Activated B cell treated with CpG ODN at 0.5 μM for 24 hours (primary cell): ENCODE measurements at regions of chr2 and their contacts with region 1.

Region 1: DNA sequence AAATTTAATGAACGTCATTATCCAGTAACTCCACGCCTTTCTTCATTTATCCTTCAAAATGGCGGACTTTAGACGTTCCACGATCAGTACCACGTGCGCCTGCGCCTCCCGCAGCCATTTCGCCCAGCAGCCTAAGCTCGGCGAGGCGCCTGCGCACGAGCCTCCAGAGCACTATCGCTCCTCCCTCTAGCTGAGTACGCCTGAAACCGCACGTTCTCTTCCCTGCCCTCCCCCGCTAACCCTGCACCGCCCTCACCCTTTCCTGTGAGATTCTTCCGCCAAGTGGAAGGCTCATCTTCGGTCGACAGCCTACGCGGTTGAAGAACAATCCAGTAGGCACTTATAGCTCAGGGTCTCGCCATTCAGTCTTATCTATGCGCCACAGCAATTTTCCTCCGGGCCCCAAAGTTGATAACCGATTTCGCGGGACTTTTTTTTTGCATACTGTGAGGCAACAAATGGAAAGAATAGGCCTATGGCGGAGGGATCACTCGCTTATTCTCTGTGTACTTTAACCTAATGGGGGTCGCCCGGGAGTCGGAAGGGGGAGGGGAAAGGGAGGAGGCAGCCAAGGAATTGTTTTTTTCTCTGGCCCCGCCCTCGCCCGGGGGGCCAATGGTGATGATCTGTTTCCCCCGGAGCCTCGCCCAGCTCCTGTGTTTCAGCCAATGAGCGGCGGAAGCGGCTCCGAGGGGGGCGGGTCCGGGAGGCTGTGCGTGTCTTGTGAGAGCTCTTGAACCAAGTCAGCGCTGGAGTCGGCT is at the start of gene KDM3A:
- DNase-seq: peak; percentile 97
- ATAC-seq: peak; percentile 81
- H3K4me3 Mint-ChIP-seq: peak within 1 kb of the TSS; percentile 96
- H3K27ac Mint-ChIP-seq: peak within 1 kb of the TSS; percentile 100
- H3K4me1 Mint-ChIP-seq: peaks cover 45% of the 10 kb centered on the region
- H3K27me3 Mint-ChIP-seq: no peaks in the 10 kb centered on the region
- CTCF ChIP-seq: no peak
- total RNA-seq, gene KDM3A: 46.0 and 47.6 TPM in 2 replicates

Region 2: DNA sequence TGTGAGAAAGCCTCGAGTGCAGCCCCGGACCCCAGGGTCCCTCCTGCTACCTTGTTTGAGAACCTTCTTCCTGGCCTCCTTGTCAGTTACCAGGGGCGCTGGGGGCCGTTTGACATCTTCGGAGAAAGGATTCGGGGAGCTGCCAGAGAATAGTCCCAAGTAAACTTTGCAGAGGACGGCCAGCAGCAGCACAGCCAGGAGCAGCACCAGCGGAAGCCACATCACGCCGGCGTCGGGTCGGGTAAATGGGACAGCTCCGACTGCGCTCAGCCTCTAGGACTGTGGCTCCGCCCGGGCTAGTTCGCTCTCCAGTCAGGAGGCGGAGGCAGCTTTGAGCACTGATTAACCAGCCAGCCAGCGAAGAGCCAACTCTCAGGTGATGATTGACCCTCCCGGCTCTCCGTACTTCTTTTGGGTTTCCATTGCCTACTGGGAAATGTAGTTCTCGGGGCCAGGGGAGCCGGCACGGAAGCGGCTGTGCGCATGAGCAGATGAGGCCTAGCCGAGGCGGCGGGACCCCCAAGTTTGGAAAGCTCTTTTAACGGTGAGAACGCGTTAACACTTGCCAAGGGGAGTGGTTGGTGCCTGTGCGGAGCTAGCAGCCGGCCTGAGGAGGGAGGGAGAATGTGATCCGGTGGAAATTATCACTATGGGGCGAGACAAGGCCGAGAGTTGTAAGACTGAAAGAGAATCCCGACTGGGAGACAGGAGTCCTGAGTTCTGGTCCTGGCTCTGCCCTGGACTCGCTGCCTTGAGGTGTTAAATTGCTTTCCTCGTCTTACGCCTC is 1086.3 kb before region 1 on chr2 and contains the starts of genes ELMOD3 and RETSAT:
- CTCF ChIA-PET with region 1: no interaction called
- POLR2A ChIA-PET with region 1: no interaction called
- intact Hi-C with region 1: loop called (anchors 5 kb)
- DNase-seq: peak; percentile 84
- ATAC-seq: peak; percentile 99
- H3K4me3 Mint-ChIP-seq: peak within 1 kb of the TSS; percentile 100
- H3K27ac Mint-ChIP-seq: peak within 1 kb of the TSS; percentile 99
- H3K4me1 Mint-ChIP-seq: peaks cover 48% of the 10 kb centered on the region
- H3K27me3 Mint-ChIP-seq: no peaks in the 10 kb centered on the region
- CTCF ChIP-seq: no peak
- total RNA-seq, gene ELMOD3: 19.2 and 25.4 TPM in 2 replicates
- total RNA-seq, gene RETSAT: 16.9 and 17.1 TPM in 2 replicates

Region 3: DNA sequence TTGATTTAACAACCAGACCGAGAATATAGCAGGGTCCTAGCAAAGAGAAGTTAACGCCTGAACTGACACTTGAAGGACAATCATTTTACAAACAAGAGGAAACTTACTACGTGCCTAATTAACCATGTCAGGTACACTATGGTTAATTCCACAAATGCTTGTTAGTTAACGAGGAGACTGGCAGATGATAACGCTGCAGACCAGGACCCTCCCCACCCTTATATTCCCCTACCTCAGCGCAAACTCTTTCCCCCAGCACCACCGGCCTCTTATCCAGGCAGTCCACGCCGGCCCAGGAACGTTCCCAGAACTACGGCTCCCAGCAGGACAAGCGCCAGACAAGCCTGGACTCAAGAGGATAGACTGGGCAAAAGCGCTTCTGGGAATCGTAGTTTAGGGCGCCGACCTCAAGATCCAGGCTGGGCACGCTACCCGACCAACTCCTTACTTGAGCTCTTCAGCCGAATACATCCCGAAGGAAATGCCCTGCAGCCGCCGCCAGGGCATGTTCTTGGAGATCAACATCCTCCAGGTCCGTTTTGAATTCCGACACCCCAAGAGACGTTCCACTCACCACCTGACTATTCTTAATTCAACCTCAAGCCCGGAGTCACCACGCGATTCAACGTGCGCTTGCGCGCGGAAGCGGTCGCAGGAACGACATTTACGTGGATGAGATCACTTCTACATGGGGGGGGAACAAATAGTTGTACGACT is 335.4 kb before region 1 on chr2 and contains the start of gene POLR1A:
- CTCF ChIA-PET with region 1: no interaction called
- POLR2A ChIA-PET with region 1: interaction called, 11 read pairs
- intact Hi-C with region 1: loop called (anchors 1 kb)
- DNase-seq: peak; percentile 70
- ATAC-seq: peak; percentile 78
- H3K4me3 Mint-ChIP-seq: peak within 1 kb of the TSS; percentile 99
- H3K27ac Mint-ChIP-seq: peak within 1 kb of the TSS; percentile 100
- H3K4me1 Mint-ChIP-seq: peaks cover 53% of the 10 kb centered on the region
- H3K27me3 Mint-ChIP-seq: no peaks in the 10 kb centered on the region
- CTCF ChIP-seq: no peak
- total RNA-seq, gene POLR1A: 47.8 and 53.4 TPM in 2 replicates

Region 4: DNA sequence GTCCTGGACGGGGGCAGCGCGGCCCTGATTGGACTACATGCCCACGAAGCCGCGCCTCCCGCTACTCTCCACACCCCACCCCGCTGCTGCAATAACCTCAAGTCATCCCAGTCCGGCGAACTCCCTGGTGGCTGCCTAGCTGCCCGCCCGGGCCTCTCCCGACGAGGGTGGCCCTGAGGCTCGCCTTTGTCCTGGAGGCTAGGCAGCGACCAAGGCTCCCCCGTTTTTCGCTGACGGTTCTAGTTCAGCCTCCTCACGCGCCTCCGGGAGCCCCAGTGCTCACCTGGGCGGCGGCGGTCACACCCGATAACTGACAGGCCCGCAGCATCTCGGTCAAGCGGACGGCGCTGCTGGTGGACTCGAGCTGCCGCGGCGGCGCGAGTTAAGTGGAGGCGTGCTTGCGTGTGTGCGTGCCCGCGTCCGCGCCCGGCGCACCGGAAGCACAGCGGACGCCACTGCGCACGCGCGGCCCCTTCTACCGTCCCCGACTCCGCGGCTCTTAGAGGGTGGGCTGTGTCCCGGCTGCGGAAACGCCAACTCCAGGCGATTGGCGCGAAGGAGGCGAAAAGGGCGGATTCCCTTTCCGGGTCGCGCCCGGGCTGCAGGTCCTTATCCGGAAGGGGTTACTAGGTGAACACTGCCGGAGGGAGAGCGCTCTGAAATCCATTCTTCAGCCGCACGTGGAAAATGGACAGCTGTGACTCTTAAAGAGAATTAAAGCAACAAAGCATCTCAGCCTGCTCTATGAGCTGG is 245.6 kb before region 1 on chr2 and contains the start of gene IMMT:
- CTCF ChIA-PET with region 1: no interaction called
- POLR2A ChIA-PET with region 1: interaction called, 38 read pairs
- intact Hi-C with region 1: loop called (anchors 1 kb)
- DNase-seq: peak; percentile 86
- ATAC-seq: peak; percentile 91
- H3K4me3 Mint-ChIP-seq: peak within 1 kb of the TSS; percentile 91
- H3K27ac Mint-ChIP-seq: peak within 1 kb of the TSS; percentile 90
- H3K4me1 Mint-ChIP-seq: peaks cover 59% of the 10 kb centered on the region
- H3K27me3 Mint-ChIP-seq: no peaks in the 10 kb centered on the region
- CTCF ChIP-seq: no peak
- total RNA-seq, gene IMMT: 90.3 and 93.0 TPM in 2 replicates

Region 5: GRCh38 chr2:86368161-86368824 is 72.5 kb before region 1 on chr2:
- CTCF ChIA-PET with region 1: interaction called, 3 read pairs
- POLR2A ChIA-PET with region 1: interaction called, 4 read pairs
- intact Hi-C with region 1: loop called (anchors 2 kb)
- DNase-seq: peak; percentile 22
- ATAC-seq: peak; percentile 84
- H3K4me3 Mint-ChIP-seq: peak overlapping the region; percentile 35
- H3K27ac Mint-ChIP-seq: no peak overlapping the region
- H3K4me1 Mint-ChIP-seq: peaks cover 11% of the 10 kb centered on the region
- H3K27me3 Mint-ChIP-seq: no peaks in the 10 kb centered on the region
- CTCF ChIP-seq: no peak

Region 6: DNA sequence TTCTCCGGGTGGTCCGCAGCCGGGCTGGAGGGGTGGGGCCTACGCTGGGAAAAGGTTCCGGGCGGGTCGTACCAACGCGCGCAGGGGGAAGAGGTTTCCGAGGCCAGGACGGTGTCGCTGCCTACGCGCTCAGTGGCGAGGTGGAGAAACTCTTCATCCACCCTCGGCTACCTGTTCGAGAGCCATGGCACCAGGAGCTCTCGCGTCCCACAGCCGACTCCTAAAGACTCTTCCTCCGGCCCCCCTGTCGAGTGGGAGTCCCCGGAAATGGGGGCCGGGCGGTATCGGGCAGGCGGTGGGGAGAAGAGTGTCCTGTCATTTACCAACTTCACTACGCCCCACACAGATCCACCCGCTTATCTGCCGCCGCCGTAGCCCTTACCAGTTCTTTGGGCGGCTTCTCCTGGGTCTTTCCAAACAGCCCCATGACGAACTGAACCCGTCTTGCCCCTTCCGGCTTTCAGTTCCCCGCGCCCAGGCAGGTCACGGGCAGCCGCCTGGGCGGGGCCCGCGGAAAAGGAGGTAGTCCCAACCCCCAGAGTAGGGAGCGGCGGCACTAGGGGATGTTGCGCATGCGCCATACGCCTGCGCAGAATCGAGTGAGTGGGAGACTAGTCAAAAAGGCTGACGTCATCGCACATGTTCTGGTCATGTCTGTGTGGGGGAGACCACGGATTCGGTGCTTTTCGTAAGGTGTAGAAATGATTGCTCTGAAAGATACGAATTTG is 122.3 kb after region 1 on chr2 and contains the start of gene CHMP3:
- CTCF ChIA-PET with region 1: no interaction called
- POLR2A ChIA-PET with region 1: interaction called, 32 read pairs
- intact Hi-C with region 1: loop called (anchors 1 kb)
- DNase-seq: peak; percentile 94
- ATAC-seq: peak; percentile 89
- H3K4me3 Mint-ChIP-seq: peak within 1 kb of the TSS; percentile 97
- H3K27ac Mint-ChIP-seq: peak within 1 kb of the TSS; percentile 98
- H3K4me1 Mint-ChIP-seq: peaks cover 38% of the 10 kb centered on the region
- H3K27me3 Mint-ChIP-seq: peaks cover under 1% of the 10 kb centered on the region
- CTCF ChIP-seq: no peak
- total RNA-seq, gene CHMP3: 61.4 and 66.9 TPM in 2 replicates

Region 7: DNA sequence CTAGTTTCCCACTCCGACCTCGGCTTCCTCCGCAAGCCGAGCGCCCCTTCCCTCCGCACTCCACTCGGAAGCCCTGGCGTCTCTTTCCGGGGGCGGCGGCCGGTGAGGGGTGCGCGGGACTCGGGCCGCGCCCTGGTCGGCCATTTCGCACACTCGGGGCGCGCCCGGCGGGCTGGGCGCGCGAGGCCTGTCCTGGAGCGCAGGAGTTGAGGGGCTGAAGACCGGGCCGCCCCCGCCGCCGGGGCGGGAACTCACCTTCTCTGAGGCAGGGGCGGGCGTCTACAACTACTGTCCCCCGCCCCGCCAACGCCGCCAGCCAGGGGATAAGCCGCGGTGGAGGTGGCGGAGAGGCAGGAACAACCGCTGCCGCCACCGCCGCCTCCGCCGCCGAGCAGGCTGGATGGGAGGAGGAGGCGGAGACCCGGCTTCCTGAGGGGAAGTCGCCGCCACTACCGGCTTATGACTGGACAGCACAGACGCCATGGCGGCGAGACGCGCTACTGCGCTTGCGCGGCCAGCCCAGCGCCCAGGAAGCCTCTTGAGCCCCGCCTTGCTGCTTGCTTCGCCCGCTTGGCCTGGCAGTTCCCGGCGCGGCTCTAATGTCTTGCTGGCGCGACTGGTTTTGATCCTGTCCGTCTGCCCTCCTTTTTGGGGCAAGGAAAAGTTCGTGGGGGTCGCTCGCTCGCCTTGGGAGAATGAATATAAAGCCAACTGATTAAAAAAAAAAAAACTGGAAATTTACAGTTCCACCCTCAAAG is 1614.7 kb after region 1 on chr2 and contains the start of gene KRCC1:
- CTCF ChIA-PET with region 1: no interaction called
- POLR2A ChIA-PET with region 1: interaction called, 3 read pairs
- intact Hi-C with region 1: loop called (anchors 10 kb)
- DNase-seq: peak; percentile 88
- ATAC-seq: peak; percentile 95
- H3K4me3 Mint-ChIP-seq: peak within 1 kb of the TSS; percentile 92
- H3K27ac Mint-ChIP-seq: peak within 1 kb of the TSS; percentile 96
- H3K4me1 Mint-ChIP-seq: peaks cover 39% of the 10 kb centered on the region
- H3K27me3 Mint-ChIP-seq: no peaks in the 10 kb centered on the region
- CTCF ChIP-seq: no peak
- total RNA-seq, gene KRCC1: 19.0 and 20.8 TPM in 2 replicates